Activated CD4-positive, alpha-beta T cell treated with anti-CD3 and anti-CD28 coated beads, Interleukin-2, amount 10 ng/mL, durations not matched to agents 24 days and 14 days (primary cell): ENCODE measurements at regions of chr11 and their contacts with region 1.

Region 1: GRCh38 chr11:66976048-66976467 is 954 bp downstream of the C11orf86 start:
- DNase-seq: peak; percentile 65
- H3K4me3 Mint-ChIP-seq: no peak overlapping the region
- H3K27ac Mint-ChIP-seq: no peak overlapping the region
- H3K4me1 Mint-ChIP-seq: peaks cover 2% of the 10 kb centered on the region
- H3K27me3 Mint-ChIP-seq: peaks cover 2% of the 10 kb centered on the region

Region 2: GRCh38 chr11:66883016-66883968 is 92.8 kb before region 1 on chr11:
- intact Hi-C with region 1: loop called (anchors 10 kb)
- DNase-seq: peak; percentile 89
- H3K4me3 Mint-ChIP-seq: no peak overlapping the region
- H3K27ac Mint-ChIP-seq: no peak overlapping the region
- H3K4me1 Mint-ChIP-seq: peaks cover 10% of the 10 kb centered on the region
- H3K27me3 Mint-ChIP-seq: no peaks in the 10 kb centered on the region

Region 3: DNA sequence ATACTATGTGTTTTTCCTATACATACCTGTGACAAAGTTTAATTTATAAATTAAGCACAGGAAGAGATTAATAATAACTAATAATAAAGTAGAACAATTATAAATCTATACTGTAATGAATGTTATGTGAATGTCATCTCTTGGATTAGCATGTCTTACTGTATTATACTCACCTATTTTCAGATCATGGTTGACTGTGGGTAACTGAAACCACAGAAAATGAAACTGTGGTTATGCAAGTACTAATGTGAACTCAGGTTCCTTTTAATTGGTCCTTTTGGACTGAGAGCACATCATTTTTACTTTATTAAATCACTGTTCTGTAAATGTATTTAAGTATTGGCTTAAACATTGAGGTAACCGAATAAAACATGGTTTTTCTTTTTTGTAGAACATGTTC is 1593.3 kb after region 1 on chr11:
- intact Hi-C with region 1: no loop called
- DNase-seq: peak; percentile 67
- H3K4me3 Mint-ChIP-seq: no peak overlapping the region
- H3K27ac Mint-ChIP-seq: no peak overlapping the region
- H3K4me1 Mint-ChIP-seq: peaks cover 21% of the 10 kb centered on the region
- H3K27me3 Mint-ChIP-seq: no peaks in the 10 kb centered on the region